OCI-LY7 (cell line): ENCODE measurements at regions of chr6 and their contacts with region 1.

Region 1: DNA sequence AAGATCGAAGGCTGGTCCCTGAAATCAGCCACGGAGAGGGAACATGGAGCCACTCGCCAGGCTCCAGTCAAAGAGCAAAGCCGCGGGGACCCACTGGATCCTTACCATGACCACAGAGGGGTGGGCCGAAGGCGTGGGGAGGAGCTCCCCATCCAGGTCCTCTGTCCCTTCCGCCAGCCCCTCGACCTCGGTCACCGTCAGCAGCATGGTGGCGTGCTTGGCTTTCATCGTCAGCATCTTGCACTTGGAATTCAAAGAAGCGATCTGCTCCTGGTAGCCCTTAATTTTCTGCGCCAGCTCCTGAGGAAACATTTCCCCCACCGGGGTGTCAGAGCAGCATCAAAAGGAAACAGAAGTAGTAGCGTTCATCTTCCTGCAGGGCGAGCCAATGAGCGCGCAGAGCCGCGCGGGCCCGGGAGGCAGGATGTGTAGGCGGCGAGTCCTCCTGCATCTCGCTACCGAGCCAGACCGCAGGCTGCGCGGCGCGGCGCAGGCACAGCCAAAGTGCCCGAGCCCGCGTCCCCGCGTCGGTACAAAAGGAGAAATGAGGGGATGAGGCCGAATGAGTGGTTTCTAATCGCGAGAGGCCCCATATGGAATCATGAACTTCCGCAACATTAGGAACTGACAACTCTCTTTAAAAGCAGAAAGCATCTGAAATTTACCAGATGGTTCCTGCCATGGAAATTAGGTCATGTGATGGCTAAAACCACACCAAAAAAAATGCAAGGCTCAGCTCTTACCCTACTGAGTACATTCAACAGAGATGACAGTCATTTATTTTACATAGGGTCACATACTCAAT is 335.2 kb downstream of the SYNE1 start:
- DNase-seq: peak; percentile 91
- H3K4me3 ChIP-seq: peak overlapping the region; percentile 79
- H3K27ac ChIP-seq: peak overlapping the region; percentile 88
- H3K4me1 ChIP-seq: peaks cover 43% of the 10 kb centered on the region
- CTCF ChIP-seq: peak; percentile 64

Region 2: DNA sequence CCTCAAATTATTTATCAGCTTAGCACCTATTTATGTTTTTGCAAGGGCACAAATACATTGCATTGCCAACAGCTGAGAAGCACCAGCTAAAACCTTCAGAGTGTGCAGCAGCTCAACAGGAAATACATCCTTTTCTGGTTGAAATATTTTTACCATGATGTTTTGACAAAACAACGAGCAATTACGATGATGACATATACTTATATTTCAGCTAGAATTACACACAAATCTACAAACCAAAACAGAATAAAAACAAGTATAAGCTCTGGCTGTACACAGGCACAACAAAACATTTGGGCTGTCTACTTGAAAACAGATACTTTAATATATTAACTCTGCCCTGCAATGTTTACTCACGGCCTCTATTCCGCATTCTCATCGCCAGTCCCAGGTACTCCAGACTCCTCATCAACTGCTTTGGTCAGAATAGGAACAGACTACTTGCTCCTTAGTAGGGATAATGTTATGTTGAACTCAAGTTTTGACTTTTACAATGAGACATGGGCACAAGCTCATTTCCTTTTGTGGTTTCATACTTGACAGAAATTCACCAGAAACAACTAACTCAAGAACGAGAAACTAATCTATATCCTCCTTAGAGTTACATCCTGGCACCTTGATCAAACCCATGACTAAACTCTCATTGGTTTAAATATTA is 116.9 kb before region 1 on chr6:
- CTCF ChIA-PET with region 1: interaction called, 3 read pairs
- POLR2A ChIA-PET with region 1: interaction called, 70 read pairs
- intact Hi-C with region 1: loop called (anchors 2 kb)
- DNase-seq: peak; percentile 66
- H3K4me3 ChIP-seq: peak overlapping the region; percentile 63
- H3K27ac ChIP-seq: peak overlapping the region; percentile 83
- H3K4me1 ChIP-seq: peaks cover 45% of the 10 kb centered on the region
- CTCF ChIP-seq: no peak

Region 3: DNA sequence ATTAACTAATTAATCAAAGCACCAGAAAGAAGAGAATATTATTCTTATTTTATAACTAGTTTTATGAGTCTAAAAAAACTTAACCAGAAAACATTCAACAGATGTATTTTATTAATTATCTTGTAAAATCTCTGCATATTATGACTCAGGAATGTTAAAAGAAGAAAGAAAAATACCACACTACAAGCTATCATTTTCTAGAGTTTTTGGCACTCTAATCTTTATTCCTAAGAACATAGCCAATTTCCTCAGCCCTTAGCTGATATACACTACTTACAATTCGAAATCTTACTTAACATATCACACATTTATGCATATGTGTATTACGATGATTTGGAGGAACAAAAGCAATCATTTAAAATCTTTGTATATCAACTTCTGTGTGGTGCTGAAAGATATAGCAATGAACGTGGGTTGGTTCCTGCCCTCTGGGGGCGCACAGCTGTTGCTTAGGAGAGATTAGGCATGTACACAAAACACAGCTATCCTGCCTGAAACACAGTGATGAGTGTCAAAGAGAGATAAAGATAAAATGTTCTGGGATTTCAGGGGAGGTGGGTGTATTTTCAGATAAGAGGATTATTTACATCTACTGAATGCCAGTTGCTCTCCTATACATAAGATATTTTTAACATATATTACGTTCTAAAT is 69.3 kb before region 1 on chr6:
- CTCF ChIA-PET with region 1: no interaction called
- POLR2A ChIA-PET with region 1: no interaction called
- intact Hi-C with region 1: no loop called
- DNase-seq: no peak
- H3K4me3 ChIP-seq: no peak overlapping the region
- H3K27ac ChIP-seq: no peak overlapping the region
- H3K4me1 ChIP-seq: no peaks in the 10 kb centered on the region
- CTCF ChIP-seq: 0 out of 2 replicates have a peak, but pooled peaks have one; percentile 16

Region 4: GRCh38 chr6:152338335-152339125 is 36.6 kb after region 1 on chr6:
- CTCF ChIA-PET with region 1: interaction called, 8 read pairs
- POLR2A ChIA-PET with region 1: interaction called, 10 read pairs
- intact Hi-C with region 1: loop called (anchors 1 kb)
- DNase-seq: peak; percentile 42
- H3K4me3 ChIP-seq: no peak overlapping the region
- H3K27ac ChIP-seq: no peak overlapping the region
- H3K4me1 ChIP-seq: no peaks in the 10 kb centered on the region
- CTCF ChIP-seq: peak; percentile 96

Region 5: GRCh38 chr6:152587473-152587872 is 285.5 kb after region 1 on chr6:
- CTCF ChIA-PET with region 1: no interaction called
- POLR2A ChIA-PET with region 1: no interaction called
- intact Hi-C with region 1: no loop called
- DNase-seq: peak; percentile 33
- H3K4me3 ChIP-seq: no peak overlapping the region
- H3K27ac ChIP-seq: no peak overlapping the region
- H3K4me1 ChIP-seq: peaks cover 9% of the 10 kb centered on the region
- CTCF ChIP-seq: no peak

Region 6: GRCh38 chr6:152982768-152983636 is 681.0 kb after region 1 on chr6 and contains the start of gene FBXO5:
- CTCF ChIA-PET with region 1: no interaction called
- POLR2A ChIA-PET with region 1: interaction called, 7 read pairs
- intact Hi-C with region 1: loop called (anchors 2 kb)
- DNase-seq: peak; percentile 98
- H3K4me3 ChIP-seq: peak within 1 kb of the TSS; percentile 98
- H3K27ac ChIP-seq: peak within 1 kb of the TSS; percentile 87
- H3K4me1 ChIP-seq: peaks cover 44% of the 10 kb centered on the region
- CTCF ChIP-seq: no peak
- total RNA-seq, gene FBXO5: 47.8 and 53.2 TPM in 2 replicates